ENCODE measurements at regions of chr20 and their contacts with region 1.

Region 1: DNA sequence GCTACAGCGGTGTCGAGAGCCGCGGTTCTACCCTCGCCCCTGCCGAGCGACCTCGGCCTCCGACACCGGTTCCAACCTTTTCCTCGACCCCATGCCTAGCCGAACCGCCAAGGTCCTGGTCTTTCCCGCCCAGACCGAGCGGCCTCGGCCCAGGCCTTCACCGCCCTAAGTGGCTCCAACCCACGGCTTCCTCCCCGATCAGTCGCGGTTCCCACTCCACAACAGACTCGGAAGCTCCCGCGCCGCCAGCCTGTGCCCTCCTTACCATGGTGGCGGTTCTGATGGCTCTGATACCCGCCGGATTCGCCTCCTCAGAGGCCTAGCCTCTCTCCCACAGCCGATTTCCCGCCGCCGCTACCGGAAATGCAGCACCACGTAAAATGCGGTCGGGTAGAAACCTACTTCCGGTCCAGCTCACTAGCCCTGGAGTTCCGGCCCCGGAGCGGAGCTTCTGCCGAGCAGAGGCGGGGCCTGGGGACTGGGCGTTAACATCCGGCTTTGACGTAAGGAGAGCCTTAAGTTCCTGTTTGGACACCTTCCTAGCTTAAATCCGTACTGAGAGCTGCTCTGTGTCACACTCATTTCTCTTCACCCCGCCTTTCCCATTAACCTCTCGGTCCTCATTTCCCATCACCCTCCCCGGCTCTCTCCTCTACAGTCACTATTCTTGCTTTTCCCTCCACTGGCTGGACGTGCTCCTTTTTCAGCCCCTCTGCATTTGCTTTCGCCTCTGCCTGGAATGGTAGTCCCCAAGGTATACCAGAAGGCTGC is at the start of gene SNRPB:
- DNase-seq: peak; percentile 99
- ATAC-seq: peak; percentile 99
- H3K4me3 ChIP-seq: peak within 1 kb of the TSS; percentile 64 to 98
- H3K27ac ChIP-seq: peak within 1 kb of the TSS; percentile 94
- H3K4me1 ChIP-seq: peaks cover 7 to 19% of the 10 kb centered on the region in 2 experiments; a peak in 3 of 4 replicates
- H3K27me3 ChIP-seq: no peaks in the 10 kb centered on the region
- CTCF ChIP-seq: no peak
- POLR2A ChIP-seq: peak; percentile 98
- RAD21 ChIP-seq: no peak
- total RNA-seq, gene SNRPB: 469 TPM

Region 2: GRCh38 chr20:2365666-2366065 is 104.9 kb before region 1 on chr20:
- CTCF ChIA-PET with region 1: no interaction called
- POLR2A ChIA-PET with region 1: no interaction called
- RAD21 ChIA-PET with region 1: no interaction called
- intact Hi-C with region 1: no loop called
- DNase-seq: no peak
- ATAC-seq: no peak
- H3K4me3 ChIP-seq: no peak overlapping the region
- H3K27ac ChIP-seq: no peak overlapping the region
- H3K4me1 ChIP-seq: no peaks in the 10 kb centered on the region
- H3K27me3 ChIP-seq: no peaks in the 10 kb centered on the region
- CTCF ChIP-seq: no peak
- POLR2A ChIP-seq: no peak
- RAD21 ChIP-seq: no peak

Region 3: DNA sequence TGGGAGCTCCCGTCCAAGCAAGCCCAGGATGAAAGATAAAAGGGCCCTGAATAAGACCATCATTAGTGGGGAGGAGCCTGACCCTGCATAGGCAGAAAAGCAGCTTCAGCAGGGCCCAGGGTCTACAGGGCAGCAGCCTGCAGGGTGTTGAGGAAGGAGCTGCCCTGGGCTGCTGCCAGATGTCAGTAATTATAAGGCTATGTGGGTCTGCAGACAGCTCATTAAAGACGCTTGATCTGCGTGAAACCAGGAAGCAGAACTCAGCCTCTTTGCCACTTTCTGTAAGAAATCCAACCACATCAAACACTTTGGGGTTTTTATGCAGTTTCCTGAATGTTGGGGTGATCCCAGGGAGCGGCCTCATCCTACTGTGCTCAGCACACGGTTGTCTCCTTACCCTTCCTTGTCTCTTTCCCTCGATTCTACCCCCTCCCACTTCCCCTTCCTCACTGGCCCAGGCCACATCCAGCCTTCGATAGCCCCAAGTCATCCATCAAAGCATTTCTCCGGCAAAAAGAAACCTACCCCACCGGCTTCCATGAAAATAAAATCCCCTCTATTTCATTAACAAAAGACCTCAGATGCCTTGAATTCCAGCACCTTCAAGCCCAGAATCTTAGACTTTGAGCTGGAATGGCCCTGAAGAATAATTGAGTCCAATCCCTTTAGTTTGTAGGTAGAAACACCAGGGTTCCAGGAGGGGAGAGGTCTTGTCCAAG is 90.9 kb before region 1 on chr20:
- CTCF ChIA-PET with region 1: no interaction called
- POLR2A ChIA-PET with region 1: no interaction called
- RAD21 ChIA-PET with region 1: no interaction called
- intact Hi-C with region 1: no loop called
- DNase-seq: no peak
- ATAC-seq: no peak
- H3K4me3 ChIP-seq: no peak overlapping the region
- H3K27ac ChIP-seq: no peak overlapping the region
- H3K4me1 ChIP-seq: no peaks in the 10 kb centered on the region
- H3K27me3 ChIP-seq: no peaks in the 10 kb centered on the region
- CTCF ChIP-seq: no peak
- POLR2A ChIP-seq: no peak
- RAD21 ChIP-seq: no peak

Region 4: DNA sequence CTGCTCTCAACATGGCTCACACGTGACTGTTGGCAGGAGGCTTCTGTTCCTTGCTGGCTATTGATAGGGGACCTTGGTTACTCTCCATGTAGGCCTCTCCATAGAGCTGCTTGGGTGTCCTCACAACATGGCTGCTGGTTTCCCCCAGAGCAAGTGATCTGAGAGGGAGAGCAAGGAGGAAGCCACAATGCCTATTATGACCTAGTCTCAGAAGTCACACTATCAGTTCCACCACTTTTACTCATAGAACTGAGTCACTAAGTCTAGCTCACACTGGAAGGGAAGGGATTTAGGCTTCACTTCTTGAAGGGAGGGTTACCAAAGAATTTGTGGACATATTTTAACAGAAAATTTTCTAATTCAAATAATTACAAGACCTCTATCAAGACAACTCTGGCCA is 173.1 kb after region 1 on chr20:
- CTCF ChIA-PET with region 1: no interaction called
- POLR2A ChIA-PET with region 1: no interaction called
- RAD21 ChIA-PET with region 1: no interaction called
- intact Hi-C with region 1: loop called (anchors 1 kb)
- DNase-seq: no peak
- ATAC-seq: no peak
- H3K4me3 ChIP-seq: no peak overlapping the region
- H3K27ac ChIP-seq: no peak overlapping the region
- H3K4me1 ChIP-seq: no peaks in the 10 kb centered on the region; a peak in 1 of 4 replicates
- H3K27me3 ChIP-seq: no peaks in the 10 kb centered on the region
- CTCF ChIP-seq: no peak
- POLR2A ChIP-seq: no peak
- RAD21 ChIP-seq: no peak

Region 5: GRCh38 chr20:2783908-2784566 is 313.4 kb after region 1 on chr20:
- CTCF ChIA-PET with region 1: no interaction called
- POLR2A ChIA-PET with region 1: no interaction called
- RAD21 ChIA-PET with region 1: no interaction called
- intact Hi-C with region 1: no loop called
- DNase-seq: no peak
- ATAC-seq: no peak
- H3K4me3 ChIP-seq: no peak overlapping the region
- H3K27ac ChIP-seq: no peak overlapping the region
- H3K4me1 ChIP-seq: no peaks in the 10 kb centered on the region
- H3K27me3 ChIP-seq: peaks cover 6% of the 10 kb centered on the region; the same call in 1 of the 2 replicates
- CTCF ChIP-seq: no peak
- POLR2A ChIP-seq: no peak
- RAD21 ChIP-seq: no peak